Heart right ventricle (tissue), 16 donors: ENCODE measurements at regions of chr21 and their contacts with region 1.

Region 1: GRCh38 chr21:33212159-33212851 is 17.4 kb upstream of the IFNAR2 start:
- DNase-seq: no peak
- ATAC-seq: peak in 7 of 8 donors; percentile 23 to 57 (median 31)
- H3K4me3 ChIP-seq: peak overlapping the region in 1 of 10 donors; percentile 5
- H3K27ac ChIP-seq: peak overlapping the region in 9 of 10 donors; percentile 11 to 65 (median 55)
- H3K4me1 ChIP-seq: peaks cover 0 to 65% (median 18%) of the 10 kb centered on the region in 9 donors
- H3K27me3 ChIP-seq: no peaks in the 10 kb centered on the region
- CTCF ChIP-seq: no peak

Region 2: DNA sequence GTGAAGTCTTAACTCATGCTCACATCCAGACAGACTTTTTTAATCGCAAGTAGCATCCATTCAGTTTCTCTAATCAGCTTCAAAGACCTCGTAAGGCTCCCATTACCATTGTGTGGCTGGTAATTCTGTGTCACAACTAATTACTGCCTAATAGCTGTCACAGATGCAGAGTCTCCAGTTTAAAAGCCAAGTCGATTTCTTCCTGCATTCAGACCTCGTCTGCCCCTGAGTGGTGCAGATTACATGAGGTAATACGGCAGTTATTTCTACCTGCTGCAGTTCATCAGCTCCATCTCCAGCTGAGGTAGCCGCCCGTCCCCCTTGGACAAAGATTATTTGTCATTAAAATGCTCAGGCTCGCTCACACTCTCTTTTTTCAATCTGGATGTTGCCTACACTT is 220.9 kb before region 1 on chr21:
- intact Hi-C with region 1: no loop called
- DNase-seq: no peak
- ATAC-seq: no peak
- H3K4me3 ChIP-seq: no peak overlapping the region
- H3K27ac ChIP-seq: no peak overlapping the region
- H3K4me1 ChIP-seq: no peaks in the 10 kb centered on the region
- H3K27me3 ChIP-seq: peaks cover 0 to 35% (median 18%) of the 10 kb centered on the region in 7 donors
- CTCF ChIP-seq: no peak

Region 3: DNA sequence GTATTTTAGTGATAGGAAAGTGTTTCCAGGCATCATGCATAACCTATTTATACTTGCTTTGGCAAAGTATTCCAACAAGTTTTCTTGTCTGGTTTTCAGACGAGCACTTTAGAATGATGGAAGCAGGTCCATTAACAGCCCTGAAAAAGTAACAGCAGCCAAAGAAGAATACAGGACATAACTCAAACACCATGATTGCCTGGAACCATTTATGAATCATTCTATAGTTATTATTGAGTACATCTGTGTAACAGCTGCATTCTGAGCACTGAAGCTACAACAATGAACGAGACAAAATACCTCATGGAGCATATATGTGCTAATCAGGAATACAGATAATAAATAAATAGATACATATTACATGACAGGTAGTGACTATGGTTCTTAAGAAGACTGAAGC is 66.4 kb after region 1 on chr21:
- intact Hi-C with region 1: loop called in 1 of 10 experiments (anchors 2 kb)
- DNase-seq: no peak
- ATAC-seq: no peak
- H3K4me3 ChIP-seq: no peak overlapping the region
- H3K27ac ChIP-seq: no peak overlapping the region
- H3K4me1 ChIP-seq: peaks cover 0 to 5% (median 0%) of the 10 kb centered on the region in 9 donors
- H3K27me3 ChIP-seq: no peaks in the 10 kb centered on the region
- CTCF ChIP-seq: no peak

Region 4: DNA sequence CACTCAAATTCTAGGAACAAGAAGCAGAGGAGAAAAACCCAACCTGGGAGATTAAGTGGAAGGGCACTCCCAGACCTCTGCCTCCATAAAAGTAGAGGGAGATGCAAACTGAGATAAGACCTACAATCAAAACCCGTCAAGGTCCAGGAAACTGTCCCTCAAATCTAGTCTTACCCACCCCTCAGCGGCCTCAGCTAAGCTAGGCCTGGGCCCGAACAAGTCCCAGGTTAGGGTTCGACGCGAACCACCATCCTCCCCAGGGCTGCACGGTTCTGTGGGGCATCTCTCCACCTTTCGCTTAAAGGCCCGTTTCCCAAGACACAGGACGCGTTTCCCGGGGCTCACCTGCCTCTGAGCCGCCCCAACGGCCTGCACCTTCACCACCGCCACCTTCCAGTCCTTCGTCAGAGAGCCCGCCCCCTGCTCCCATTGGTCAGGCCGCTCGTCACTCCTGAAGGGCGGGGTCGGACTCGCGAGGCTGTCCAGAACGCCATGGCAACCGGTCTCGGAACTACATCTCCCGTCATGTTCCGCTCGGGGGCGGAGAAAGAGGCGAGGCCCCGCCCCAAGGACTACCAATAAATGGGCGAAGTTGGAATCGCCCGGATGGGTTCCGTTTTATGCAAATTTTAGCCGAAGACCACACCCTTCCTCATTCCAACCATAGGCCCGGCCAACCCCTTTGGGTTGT is 429.2 kb after region 1 on chr21 and contains the start of gene CRYZL1:
- intact Hi-C with region 1: no loop called
- DNase-seq: peak; percentile 100
- ATAC-seq: peak; percentile 89 to 95 (median 94)
- H3K4me3 ChIP-seq: peak within 1 kb of the TSS; percentile 66 to 96 (median 88)
- H3K27ac ChIP-seq: peak within 1 kb of the TSS; percentile 78 to 93 (median 86)
- H3K4me1 ChIP-seq: peaks cover 3 to 42% (median 25%) of the 10 kb centered on the region in 9 donors
- H3K27me3 ChIP-seq: no peaks in the 10 kb centered on the region
- CTCF ChIP-seq: no peak
- total RNA-seq, gene CRYZL1: 19.0 to 29.8 (median 26.0) TPM